ENCODE measurements at regions of chr17 and their contacts with region 1.

Region 1: GRCh38 chr17:82551779-82552457 is 32.4 kb downstream of the FOXK2 start:
- DNase-seq: no peak
- ATAC-seq: peak; percentile 100
- H3K4me3 ChIP-seq: no peak overlapping the region
- H3K27ac ChIP-seq: no peak overlapping the region
- H3K4me1 ChIP-seq: peaks cover 31% of the 10 kb centered on the region
- H3K27me3 ChIP-seq: no peaks in the 10 kb centered on the region
- CTCF ChIP-seq: peak; percentile 89 to 97 (median 90)
- EP300 ChIP-seq: no peak
- POLR2A ChIP-seq: no peak; the same call in 1 of the 2 replicates
- RAD21 ChIP-seq: peak; percentile 95

Region 2: DNA sequence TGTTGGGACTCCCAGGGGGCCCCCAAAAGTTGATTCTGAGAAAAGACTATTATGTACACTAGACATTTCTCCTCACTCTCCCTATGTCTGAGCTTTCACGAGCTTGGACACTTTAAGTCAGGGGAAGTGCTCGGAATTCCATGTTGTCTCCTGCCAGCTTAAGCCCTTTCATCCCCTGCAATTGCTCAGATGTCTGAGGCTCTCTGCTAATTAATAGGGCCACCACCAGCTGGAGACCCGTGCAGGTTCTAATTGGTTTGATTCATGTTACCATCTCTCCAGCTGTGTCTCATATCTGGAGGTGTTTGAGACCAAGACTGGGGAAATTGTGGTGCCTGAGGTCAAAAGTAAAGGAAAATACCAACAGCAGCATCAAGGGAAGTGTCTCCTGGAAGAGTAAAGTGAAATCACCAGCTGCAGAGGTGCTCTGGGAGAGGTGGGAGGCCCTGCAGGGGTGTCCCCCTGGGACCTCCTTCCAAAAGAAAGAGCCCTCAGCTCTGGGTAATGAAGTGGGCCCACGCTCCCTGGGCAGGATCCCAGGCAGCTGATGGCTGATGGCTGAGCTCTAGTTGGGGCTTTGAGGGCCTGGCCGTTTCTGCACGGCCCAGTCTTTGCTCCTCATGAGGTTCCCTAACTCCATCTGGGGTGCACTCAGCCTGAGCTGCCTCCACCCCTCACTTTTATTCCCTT is 186.2 kb before region 1 on chr17:
- CTCF ChIA-PET with region 1: no interaction called
- POLR2A ChIA-PET with region 1: no interaction called
- RAD21 ChIA-PET with region 1: no interaction called
- SMC1A ChIA-PET with region 1: no interaction called
- in situ Hi-C with region 1: no loop called
- intact Hi-C with region 1: no loop called
- DNase-seq: no peak
- ATAC-seq: no peak
- H3K4me3 ChIP-seq: no peak overlapping the region
- H3K27ac ChIP-seq: no peak overlapping the region
- H3K4me1 ChIP-seq: peaks cover 1% of the 10 kb centered on the region
- H3K27me3 ChIP-seq: no peaks in the 10 kb centered on the region
- CTCF ChIP-seq: no peak
- EP300 ChIP-seq: no peak
- POLR2A ChIP-seq: no peak
- RAD21 ChIP-seq: no peak

Region 3: GRCh38 chr17:82450170-82451106 is 101.5 kb before region 1 on chr17 and contains the start of gene CYBC1:
- CTCF ChIA-PET with region 1: interaction called, 5 read pairs
- POLR2A ChIA-PET with region 1: no interaction called
- RAD21 ChIA-PET with region 1: interaction called, 3 read pairs
- SMC1A ChIA-PET with region 1: no interaction called
- in situ Hi-C with region 1: no loop called
- intact Hi-C with region 1: loop called (anchors 5 kb)
- DNase-seq: peak; percentile 63
- ATAC-seq: peak; percentile 79
- H3K4me3 ChIP-seq: peak within 1 kb of the TSS; percentile 93
- H3K27ac ChIP-seq: peak within 1 kb of the TSS; percentile 97
- H3K4me1 ChIP-seq: peaks cover 4% of the 10 kb centered on the region
- H3K27me3 ChIP-seq: no peaks in the 10 kb centered on the region
- CTCF ChIP-seq: no peak
- EP300 ChIP-seq: no peak
- POLR2A ChIP-seq: peak; percentile 98
- RAD21 ChIP-seq: no peak
- polyA plus RNA-seq, gene CYBC1: 4.2 to 8.5 TPM

Region 4: DNA sequence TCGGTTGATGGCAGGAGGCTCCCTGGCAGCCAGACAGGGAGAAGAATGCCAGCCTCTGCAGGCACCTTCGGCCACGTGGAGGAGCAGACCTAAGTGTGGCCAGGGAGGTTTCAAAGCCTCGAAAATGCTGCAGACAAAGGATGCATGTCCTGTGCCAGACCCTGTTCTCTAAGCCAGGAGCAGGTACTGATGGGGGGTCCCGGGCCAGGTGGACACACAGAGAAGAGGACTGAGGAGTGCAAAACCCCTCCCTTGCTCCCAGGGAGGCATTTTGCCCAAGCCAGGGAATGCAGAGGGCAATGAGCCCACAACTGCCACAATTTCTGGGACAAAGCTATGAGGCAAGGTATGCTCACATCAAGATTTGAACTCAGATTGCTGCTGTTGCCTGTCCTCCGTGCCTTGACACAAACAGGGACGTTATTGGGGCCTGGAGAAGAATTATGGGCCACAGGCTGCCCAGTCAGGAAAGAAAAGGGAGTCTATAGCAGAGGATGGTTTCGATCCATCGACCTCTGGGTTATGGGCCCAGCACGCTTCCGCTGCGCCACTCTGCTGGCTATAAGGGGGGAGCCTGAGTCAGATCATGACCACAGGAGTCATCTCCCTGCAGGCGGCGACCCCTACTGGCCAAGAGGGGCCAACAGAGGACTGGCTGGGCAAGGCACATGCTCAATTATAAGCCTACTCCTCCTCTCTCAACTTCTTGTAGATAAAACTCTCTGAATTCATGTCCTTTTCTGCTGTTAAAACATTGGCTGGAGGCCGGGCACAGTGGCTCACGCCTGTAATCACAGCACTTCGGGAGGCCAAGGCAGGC is 57.5 kb before region 1 on chr17:
- CTCF ChIA-PET with region 1: interaction called, 10 read pairs
- POLR2A ChIA-PET with region 1: interaction called, 3 read pairs
- RAD21 ChIA-PET with region 1: interaction called, 7 read pairs
- SMC1A ChIA-PET with region 1: interaction called, 4 read pairs
- in situ Hi-C with region 1: no loop called
- intact Hi-C with region 1: loop called (anchors 1 kb)
- DNase-seq: peak; percentile 89
- ATAC-seq: peak; percentile 85
- H3K4me3 ChIP-seq: peak overlapping the region; percentile 35; the same call in 1 of the 2 replicates
- H3K27ac ChIP-seq: no peak overlapping the region
- H3K4me1 ChIP-seq: peaks cover 29% of the 10 kb centered on the region
- H3K27me3 ChIP-seq: no peaks in the 10 kb centered on the region
- CTCF ChIP-seq: peak; percentile 87 to 97 (median 93)
- EP300 ChIP-seq: peak in 1 of 2 experiments; percentile 47; a peak in 1 of 4 replicates
- POLR2A ChIP-seq: no peak
- RAD21 ChIP-seq: peak; percentile 52

Region 5: GRCh38 chr17:82528484-82529265 is 23.2 kb before region 1 on chr17:
- CTCF ChIA-PET with region 1: interaction called, 20 read pairs
- POLR2A ChIA-PET with region 1: interaction called, 4 read pairs
- RAD21 ChIA-PET with region 1: interaction called, 3 read pairs
- SMC1A ChIA-PET with region 1: interaction called, 5 read pairs
- in situ Hi-C with region 1: no loop called
- intact Hi-C with region 1: no loop called
- DNase-seq: no peak
- ATAC-seq: peak; percentile 57
- H3K4me3 ChIP-seq: no peak overlapping the region
- H3K27ac ChIP-seq: no peak overlapping the region
- H3K4me1 ChIP-seq: peaks cover 19% of the 10 kb centered on the region
- H3K27me3 ChIP-seq: no peaks in the 10 kb centered on the region
- CTCF ChIP-seq: peak; percentile 13 to 41 (median 23); a peak in 4 of 6 replicates
- EP300 ChIP-seq: no peak
- POLR2A ChIP-seq: no peak
- RAD21 ChIP-seq: no peak

Region 6: GRCh38 chr17:82740906-82741759 is 189.2 kb after region 1 on chr17:
- CTCF ChIA-PET with region 1: no interaction called
- POLR2A ChIA-PET with region 1: no interaction called
- RAD21 ChIA-PET with region 1: no interaction called
- SMC1A ChIA-PET with region 1: no interaction called
- in situ Hi-C with region 1: no loop called
- intact Hi-C with region 1: no loop called
- DNase-seq: no peak
- ATAC-seq: no peak
- H3K4me3 ChIP-seq: no peak overlapping the region
- H3K27ac ChIP-seq: no peak overlapping the region
- H3K4me1 ChIP-seq: no peaks in the 10 kb centered on the region
- H3K27me3 ChIP-seq: no peaks in the 10 kb centered on the region
- CTCF ChIP-seq: no peak
- EP300 ChIP-seq: no peak
- POLR2A ChIP-seq: no peak
- RAD21 ChIP-seq: no peak

Measured in GM12878 (cell line).